Activated T-helper 1 cell treated with anti-CD3 and anti-CD28 coated beads, Interleukin-12 subunit alpha, Interleukin-12 subunit beta, Interleukin-2, Interleukin-4 antibody, amounts not matched to agents 30 ng/mL and 10 ng/mL and 1 ng/mL, durations not matched to agents 14 hours and 24 hours and 36 hours (primary cell): ENCODE measurements at regions of chr11 and their contacts with region 1.

Region 1: GRCh38 chr11:65477149-65477965 is 21.5 kb upstream of the MALAT1 start:
- DNase-seq: peak; percentile 89
- H3K4me3 Mint-ChIP-seq: peak overlapping the region; percentile 99
- H3K27ac Mint-ChIP-seq: peak overlapping the region; percentile 100
- H3K4me1 Mint-ChIP-seq: peaks cover 9% of the 10 kb centered on the region
- H3K27me3 Mint-ChIP-seq: peaks cover 4% of the 10 kb centered on the region

Region 2: DNA sequence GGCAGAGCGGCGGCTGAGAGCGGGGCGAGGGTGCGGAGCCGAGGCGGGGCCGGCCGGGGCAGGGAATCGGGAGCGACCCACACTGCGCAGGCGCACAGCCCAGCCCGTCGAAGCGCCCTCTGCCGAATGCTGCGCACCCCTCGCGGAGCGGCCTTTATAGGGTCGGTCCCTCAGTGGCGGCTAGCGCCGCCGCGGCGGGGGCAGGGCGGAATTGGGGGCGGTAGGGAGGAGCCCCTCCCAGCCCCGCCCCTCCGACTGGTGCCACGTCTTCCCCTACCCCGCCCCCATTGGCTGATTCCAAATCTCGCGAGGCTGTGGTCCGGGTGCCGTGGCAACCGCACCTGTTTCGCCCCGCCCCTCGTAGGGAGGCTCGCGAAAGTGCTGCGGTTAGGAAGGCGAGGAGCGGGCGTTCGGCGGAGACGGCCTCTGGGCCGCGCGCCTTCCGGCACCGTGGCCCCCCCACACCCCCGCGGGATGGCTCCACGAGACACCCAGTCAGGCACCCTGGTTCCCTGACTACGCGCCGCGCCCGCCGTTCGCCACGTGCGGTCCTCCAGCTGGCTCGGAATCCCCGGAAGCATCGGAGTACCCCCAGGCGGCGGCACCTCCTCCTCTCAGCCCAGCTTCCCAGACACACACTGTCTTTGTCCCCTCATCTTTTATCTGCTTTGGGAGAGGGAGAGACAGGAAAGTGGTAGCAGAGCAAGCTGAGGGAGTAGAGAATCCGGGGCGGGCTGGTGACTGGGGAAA is 598.7 kb before region 1 on chr11 and contains the start of gene EHD1:
- intact Hi-C with region 1: loop called (anchors 5 kb)
- DNase-seq: peak; percentile 99
- H3K4me3 Mint-ChIP-seq: peak within 1 kb of the TSS; percentile 99
- H3K27ac Mint-ChIP-seq: peak within 1 kb of the TSS; percentile 83
- H3K4me1 Mint-ChIP-seq: peaks cover 64% of the 10 kb centered on the region
- H3K27me3 Mint-ChIP-seq: no peaks in the 10 kb centered on the region
- total RNA-seq, gene EHD1: 88.0 and 96.9 TPM in 2 replicates

Region 3: GRCh38 chr11:65290448-65291165 is 186.8 kb before region 1 on chr11:
- intact Hi-C with region 1: no loop called
- DNase-seq: no peak
- H3K4me3 Mint-ChIP-seq: no peak overlapping the region
- H3K27ac Mint-ChIP-seq: peak overlapping the region; percentile 12
- H3K4me1 Mint-ChIP-seq: no peaks in the 10 kb centered on the region
- H3K27me3 Mint-ChIP-seq: no peaks in the 10 kb centered on the region

Region 4: GRCh38 chr11:65425971-65426838 is 51.2 kb before region 1 on chr11:
- intact Hi-C with region 1: loop called (anchors 1 kb)
- DNase-seq: no peak
- H3K4me3 Mint-ChIP-seq: peak overlapping the region; percentile 99
- H3K27ac Mint-ChIP-seq: peak overlapping the region; percentile 99
- H3K4me1 Mint-ChIP-seq: peaks cover 71% of the 10 kb centered on the region
- H3K27me3 Mint-ChIP-seq: peaks cover 10% of the 10 kb centered on the region

Region 5: DNA sequence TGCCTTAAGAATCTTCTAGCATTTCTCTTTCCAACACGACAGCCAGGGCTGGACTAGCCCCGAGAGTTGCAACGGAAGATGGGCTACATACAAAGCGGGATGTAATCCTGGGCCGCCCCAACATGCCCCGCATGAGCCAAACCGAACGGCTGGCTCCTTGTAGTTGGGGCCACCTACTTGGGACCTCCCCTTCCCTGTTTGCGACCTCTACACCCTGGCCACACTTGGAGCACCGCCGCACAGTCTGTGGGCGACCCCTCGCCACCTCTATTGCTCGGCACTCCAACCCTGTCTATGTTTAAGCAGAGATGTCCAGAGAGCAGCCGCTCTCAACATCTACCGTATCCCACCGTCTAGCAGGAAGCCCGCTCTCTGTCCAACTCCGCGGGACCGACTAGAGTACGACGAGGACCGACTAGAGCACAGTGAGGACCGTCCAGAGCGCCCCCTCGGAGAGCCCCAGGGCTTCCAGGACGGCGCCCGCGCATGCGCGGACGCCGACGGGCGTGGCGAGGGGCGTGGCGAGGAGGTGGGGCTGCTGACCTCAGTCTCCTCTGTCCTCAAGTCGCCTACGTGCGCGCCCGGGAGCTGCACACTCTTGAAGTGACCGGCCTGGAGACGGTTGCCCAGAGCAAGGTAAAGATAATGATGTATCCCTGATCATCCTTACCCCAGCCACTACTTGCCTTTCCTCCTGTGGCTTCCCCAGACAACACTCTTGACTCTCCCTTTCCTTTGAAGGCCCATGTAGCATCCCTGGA is 22.5 kb before region 1 on chr11:
- intact Hi-C with region 1: loop called (anchors 2 kb)
- DNase-seq: peak; percentile 82
- H3K4me3 Mint-ChIP-seq: peak overlapping the region; percentile 95
- H3K27ac Mint-ChIP-seq: peak overlapping the region; percentile 81
- H3K4me1 Mint-ChIP-seq: peaks cover 36% of the 10 kb centered on the region
- H3K27me3 Mint-ChIP-seq: peaks cover 2% of the 10 kb centered on the region

Region 6: DNA sequence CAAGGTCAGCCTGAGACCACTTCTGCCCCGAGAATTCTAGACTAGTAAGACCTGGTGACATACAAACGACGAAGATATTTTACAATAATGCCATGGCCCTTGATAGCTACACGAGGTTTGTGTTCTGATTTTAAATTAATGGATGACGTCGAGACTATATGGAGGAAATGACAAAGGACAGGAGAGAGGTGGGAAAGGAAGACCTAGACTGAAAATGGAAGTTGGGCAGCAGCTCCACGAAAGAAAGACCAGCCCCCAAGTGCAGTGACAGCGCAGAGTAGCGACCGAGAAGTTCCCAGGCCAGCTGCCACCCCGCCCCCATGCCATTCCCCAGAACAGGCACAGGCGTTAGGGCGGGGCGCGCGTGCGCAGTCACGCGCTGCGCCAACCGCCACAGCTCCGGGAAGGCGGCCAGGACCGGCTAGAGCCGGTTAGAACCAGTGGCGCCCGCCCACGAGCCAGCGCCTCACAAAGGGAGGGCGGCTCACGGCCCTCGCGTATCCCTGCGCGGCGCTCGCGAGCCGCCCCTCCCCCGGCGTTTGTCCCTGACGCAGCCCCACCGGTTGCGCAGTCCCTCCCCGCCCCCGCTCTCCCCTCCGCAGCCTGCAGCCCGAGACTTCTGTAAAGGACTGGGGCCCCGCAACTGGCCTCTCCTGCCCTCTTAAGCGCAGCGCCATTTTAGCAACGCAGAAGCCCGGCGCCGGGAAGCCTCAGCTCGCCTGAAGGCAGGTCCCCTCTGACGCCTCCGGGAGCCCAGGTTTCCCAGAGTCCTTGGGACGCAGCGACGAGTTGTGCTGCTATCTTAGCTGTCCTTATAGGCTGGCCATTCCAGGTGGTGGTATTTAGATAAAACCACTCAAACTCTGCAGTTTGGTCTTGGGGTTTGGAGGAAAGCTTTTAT is 20.0 kb after region 1 on chr11:
- intact Hi-C with region 1: loop called (anchors 1 kb)
- DNase-seq: peak; percentile 98
- H3K4me3 Mint-ChIP-seq: no peak overlapping the region
- H3K27ac Mint-ChIP-seq: no peak overlapping the region
- H3K4me1 Mint-ChIP-seq: peaks cover 37% of the 10 kb centered on the region
- H3K27me3 Mint-ChIP-seq: no peaks in the 10 kb centered on the region